HCT116 (cell line): ENCODE measurements at regions of chr10 and their contacts with region 1.

Region 1: DNA sequence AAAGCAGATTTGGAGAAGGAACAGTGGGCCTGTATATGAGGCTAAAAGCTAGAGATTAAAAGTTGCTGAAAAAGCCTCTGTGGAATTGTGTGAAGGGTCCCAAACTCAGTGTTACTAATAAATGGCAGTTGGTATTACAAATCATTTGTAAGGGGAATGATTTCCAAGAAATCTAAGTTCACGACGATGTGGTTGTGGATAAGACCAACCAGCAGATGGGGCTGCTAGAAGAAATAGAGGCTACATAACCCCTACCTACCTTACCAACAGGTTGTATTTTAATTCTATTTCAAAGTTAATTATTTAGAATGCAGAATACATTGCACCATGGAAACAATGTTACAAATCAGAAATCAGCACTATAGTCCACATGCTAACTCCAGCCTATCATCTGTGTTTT is 377.1 kb downstream of the HPSE2 start:
- DNase-seq: peak; percentile 39
- ATAC-seq: peak; percentile 84
- H3K4me3 ChIP-seq: no peak overlapping the region
- H3K27ac ChIP-seq: no peak overlapping the region
- H3K4me1 ChIP-seq: no peaks in the 10 kb centered on the region
- H3K27me3 ChIP-seq: peaks cover 21% of the 10 kb centered on the region
- CTCF ChIP-seq: peak; percentile 44 to 65 (median 55); a peak in 5 of 6 replicates
- POLR2A ChIP-seq: no peak
- RAD21 ChIP-seq: peak; percentile 49

Region 2: DNA sequence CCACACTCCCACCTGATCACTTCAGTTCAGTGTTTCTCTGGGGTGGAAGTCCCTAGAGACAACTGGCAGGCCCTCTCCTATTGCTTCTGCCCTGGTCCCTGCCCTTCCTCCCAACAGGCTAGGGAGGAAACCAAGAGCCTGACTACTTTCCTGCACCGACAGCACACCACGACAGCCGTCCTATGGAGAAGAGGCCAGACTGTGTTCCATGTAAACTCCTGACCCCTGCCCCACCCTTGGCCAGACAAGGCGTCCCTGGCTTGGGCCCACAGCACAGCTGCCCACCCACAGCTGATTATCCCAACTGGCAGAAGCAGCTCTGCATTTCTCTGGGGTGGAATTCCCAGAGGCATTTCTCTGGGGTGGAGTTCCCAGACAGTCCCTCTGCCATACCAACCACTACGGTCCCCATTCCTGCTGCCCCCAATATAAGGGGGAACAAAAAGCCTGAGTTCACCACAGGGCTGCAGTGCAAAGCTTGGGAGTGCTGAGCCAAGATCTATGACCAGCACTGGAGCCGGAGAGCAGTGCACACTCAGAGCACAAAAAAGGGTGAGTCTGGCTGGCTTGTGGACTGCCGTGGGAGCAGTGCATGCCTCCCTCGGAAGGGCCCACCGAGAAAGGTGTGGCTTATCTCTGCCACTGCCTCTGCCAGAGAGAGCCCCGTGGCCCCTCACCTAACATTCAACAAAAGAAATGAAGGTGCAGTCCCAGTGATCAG is 183.7 kb after region 1 on chr10:
- CTCF ChIA-PET with region 1: interaction called, 6 read pairs
- POLR2A ChIA-PET with region 1: no interaction called
- RAD21 ChIA-PET with region 1: no interaction called
- intact Hi-C with region 1: loop called (anchors 2 kb)
- DNase-seq: no peak
- ATAC-seq: peak; percentile 67
- H3K4me3 ChIP-seq: no peak overlapping the region
- H3K27ac ChIP-seq: no peak overlapping the region
- H3K4me1 ChIP-seq: no peaks in the 10 kb centered on the region
- H3K27me3 ChIP-seq: peaks cover 8% of the 10 kb centered on the region; the same call in 1 of the 2 replicates
- CTCF ChIP-seq: no peak
- POLR2A ChIP-seq: no peak
- RAD21 ChIP-seq: no peak

Region 3: DNA sequence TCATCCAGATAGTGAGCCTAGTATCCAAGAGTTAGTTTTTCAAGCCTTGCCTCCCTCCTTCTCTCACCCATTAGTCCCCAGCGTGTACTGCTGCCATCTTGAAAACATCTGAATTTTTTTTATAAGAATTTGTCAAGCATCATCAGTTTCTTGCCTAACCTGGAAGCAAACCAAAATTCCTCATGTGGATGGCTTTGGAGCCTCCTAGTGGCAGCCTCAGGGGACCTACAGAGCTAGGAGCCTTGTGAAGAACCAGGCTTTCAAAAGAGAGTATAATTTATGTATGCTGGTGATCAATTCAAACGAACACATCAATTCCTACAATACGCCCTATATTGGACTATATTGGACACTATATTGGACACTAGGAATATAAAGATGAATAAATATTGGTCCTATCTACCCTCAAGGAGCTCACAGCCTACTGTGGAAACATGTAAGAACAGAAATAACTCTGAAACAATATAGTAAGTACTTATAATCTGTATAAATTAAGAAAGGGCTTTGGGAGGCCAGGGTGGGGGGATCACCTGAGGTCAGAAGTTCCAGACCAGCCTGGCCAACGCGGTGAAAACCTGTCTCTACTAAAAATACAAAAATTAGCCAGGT is 313.7 kb after region 1 on chr10:
- CTCF ChIA-PET with region 1: interaction called, 3 read pairs
- POLR2A ChIA-PET with region 1: no interaction called
- RAD21 ChIA-PET with region 1: no interaction called
- intact Hi-C with region 1: loop called (anchors 5 kb)
- DNase-seq: peak; percentile 51
- ATAC-seq: peak; percentile 90
- H3K4me3 ChIP-seq: no peak overlapping the region
- H3K27ac ChIP-seq: no peak overlapping the region
- H3K4me1 ChIP-seq: no peaks in the 10 kb centered on the region
- H3K27me3 ChIP-seq: peaks cover 47% of the 10 kb centered on the region
- CTCF ChIP-seq: peak; percentile 55 to 89 (median 89); a peak in 5 of 6 replicates
- POLR2A ChIP-seq: no peak
- RAD21 ChIP-seq: peak; percentile 77

Region 4: GRCh38 chr10:99276848-99277486 is 418.4 kb after region 1 on chr10:
- CTCF ChIA-PET with region 1: interaction called, 5 read pairs
- POLR2A ChIA-PET with region 1: no interaction called
- RAD21 ChIA-PET with region 1: no interaction called
- intact Hi-C with region 1: loop called (anchors 1 kb)
- DNase-seq: peak; percentile 46
- ATAC-seq: peak; percentile 81
- H3K4me3 ChIP-seq: no peak overlapping the region
- H3K27ac ChIP-seq: no peak overlapping the region
- H3K4me1 ChIP-seq: no peaks in the 10 kb centered on the region
- H3K27me3 ChIP-seq: peaks cover 15% of the 10 kb centered on the region
- CTCF ChIP-seq: peak; percentile 60 to 86 (median 65); a peak in 5 of 6 replicates
- POLR2A ChIP-seq: no peak
- RAD21 ChIP-seq: peak; percentile 85

Region 5: DNA sequence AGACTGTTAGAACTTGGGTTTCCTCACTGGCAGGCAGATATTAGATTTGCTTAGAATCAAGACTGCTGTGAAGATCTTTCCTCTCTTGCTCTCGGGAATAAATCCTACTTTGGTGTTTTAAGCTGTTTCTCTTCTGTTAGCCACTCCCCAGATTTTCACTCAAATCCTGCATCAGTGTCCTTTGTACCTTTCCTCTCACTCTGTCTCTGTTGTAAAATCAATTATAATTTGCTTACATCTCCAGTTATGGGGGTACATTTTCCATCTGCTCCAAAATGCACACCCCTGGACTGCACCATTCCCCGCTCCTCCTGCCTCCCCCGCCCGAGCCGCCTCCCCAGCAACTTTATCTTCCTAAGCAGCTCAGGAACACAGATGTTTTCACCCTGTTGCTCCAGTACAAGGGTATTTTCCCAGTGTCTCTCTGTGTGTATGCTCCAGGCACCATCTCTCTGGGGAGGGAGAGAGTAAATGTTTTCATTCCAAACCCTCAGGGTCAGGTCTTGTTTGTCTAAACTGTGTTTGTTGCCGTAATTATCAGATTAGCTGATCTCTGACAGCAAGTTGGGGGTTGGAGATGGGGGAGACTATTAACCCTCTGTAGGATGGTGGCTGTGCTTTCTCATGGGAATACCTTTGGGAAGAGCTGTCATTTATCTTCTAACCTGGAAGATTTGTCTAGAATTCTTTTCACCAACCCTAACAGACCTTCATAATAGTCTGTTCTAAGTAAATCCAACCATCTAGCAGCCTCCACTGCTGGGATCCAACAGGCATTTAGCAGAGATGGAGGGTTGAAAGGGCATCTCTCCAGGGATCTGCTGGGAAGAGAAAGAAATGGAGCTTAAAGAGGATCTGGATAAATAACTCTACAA is 592.3 kb after region 1 on chr10:
- CTCF ChIA-PET with region 1: no interaction called
- POLR2A ChIA-PET with region 1: no interaction called
- RAD21 ChIA-PET with region 1: no interaction called
- intact Hi-C with region 1: no loop called
- DNase-seq: no peak
- ATAC-seq: no peak
- H3K4me3 ChIP-seq: no peak overlapping the region
- H3K27ac ChIP-seq: no peak overlapping the region
- H3K4me1 ChIP-seq: no peaks in the 10 kb centered on the region
- H3K27me3 ChIP-seq: peaks cover 80% of the 10 kb centered on the region
- CTCF ChIP-seq: no peak
- POLR2A ChIP-seq: no peak
- RAD21 ChIP-seq: no peak